HepG2 (cell line): ENCODE measurements at regions of chr3 and their contacts with region 1.

Region 1: DNA sequence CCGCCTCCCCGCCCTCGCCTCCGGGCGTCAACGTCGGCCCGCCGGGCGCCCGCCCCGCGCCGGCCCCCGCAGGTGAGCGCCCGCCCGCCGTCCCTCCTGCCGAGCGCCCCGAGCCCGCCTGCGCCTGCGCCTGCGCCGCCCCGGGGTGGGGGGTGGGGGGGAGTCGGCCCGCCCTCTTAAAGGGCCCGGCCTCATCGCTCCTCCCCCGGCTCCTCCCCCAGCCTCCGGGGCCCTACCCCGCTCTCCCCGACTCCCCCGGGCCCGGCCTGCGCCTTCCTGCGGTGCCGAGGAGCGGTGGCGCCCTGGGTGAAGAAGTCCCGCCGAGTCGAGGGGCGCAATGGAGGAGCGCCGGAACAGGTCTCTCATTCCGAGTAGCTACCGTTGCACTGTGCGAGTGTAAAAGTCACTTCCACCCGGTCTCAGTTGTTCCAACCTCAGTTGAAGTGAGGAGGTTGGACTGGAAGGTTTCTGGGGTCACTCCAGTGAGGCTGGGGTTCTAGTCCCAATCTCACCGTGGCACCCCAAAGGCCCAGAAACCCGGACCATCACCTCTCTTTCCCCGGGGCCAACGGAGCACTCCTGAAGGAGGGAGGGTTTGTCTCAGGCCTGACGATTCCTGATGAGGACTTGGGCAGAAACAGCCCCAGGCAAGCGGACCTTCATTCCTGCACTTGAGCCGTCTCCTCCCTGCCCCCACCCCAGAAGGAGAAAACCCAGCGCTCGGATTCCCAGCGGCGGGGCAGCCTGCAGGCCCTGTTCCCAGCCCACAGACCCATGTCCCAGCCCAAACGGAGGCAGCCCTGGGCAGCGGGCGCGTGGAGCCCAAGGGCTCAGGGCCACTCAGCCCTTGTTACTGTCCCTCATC is 1.5 kb upstream of the TNK2 start:
- DNase-seq: peak; percentile 58
- ATAC-seq: peak; percentile 68
- H3K4me3 ChIP-seq: peak overlapping the region; percentile 57 to 78 (median 63)
- H3K27ac ChIP-seq: no peak overlapping the region
- H3K4me1 ChIP-seq: peaks cover 69% of the 10 kb centered on the region
- H3K27me3 ChIP-seq: peaks cover 0 to 7% of the 10 kb centered on the region in 2 experiments; a peak in 3 of 5 replicates
- CTCF ChIP-seq: peak; percentile 45; the same call in 1 of the 2 replicates
- EP300 ChIP-seq: no peak
- POLR2A ChIP-seq: no peak; a peak in 1 of 4 replicates
- RAD21 ChIP-seq: no peak

Region 2: DNA sequence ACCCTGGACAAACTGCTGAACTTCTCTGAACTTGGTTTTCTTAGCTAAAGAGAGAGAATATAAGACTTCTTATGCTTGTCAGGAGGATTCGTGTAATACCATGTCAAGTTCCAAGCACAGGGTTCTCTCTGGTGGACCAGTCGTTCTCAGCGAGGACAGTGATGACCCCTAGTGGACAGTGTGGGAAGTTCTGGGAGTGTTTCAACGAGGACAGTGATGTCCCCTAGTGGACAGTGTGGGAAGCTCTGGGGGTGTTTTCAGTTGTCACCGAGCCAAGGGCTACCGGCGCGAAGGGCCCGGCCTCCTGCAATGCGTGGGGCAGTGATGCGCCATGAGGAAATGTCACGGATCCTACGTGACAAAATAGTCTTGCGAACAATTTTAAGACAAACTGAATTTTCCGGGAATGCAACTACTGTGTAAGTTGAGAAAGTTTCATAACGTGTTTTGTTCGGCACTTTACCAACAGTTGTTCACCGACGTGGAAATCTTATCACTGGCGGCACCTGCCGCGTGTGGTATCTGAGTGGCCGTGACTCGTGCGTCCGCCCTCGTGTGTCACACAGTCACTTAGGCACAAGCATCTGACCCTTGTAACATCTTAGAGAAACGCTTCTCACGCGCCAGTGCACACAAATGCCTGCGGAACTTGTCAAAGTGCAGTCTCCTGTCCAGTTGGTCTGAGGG is 58.9 kb before region 1 on chr3:
- CTCF ChIA-PET with region 1: interaction called, 4 read pairs
- POLR2A ChIA-PET with region 1: no interaction called
- in situ Hi-C with region 1: loop called (anchors 10 kb)
- intact Hi-C with region 1: no loop called
- DNase-seq: peak; percentile 86
- ATAC-seq: peak; percentile 57
- H3K4me3 ChIP-seq: peak overlapping the region in 1 of 3 experiments; percentile 26; a peak in 1 of 6 replicates
- H3K27ac ChIP-seq: no peak overlapping the region
- H3K4me1 ChIP-seq: peaks cover 39% of the 10 kb centered on the region
- H3K27me3 ChIP-seq: peaks cover 0 to 28% of the 10 kb centered on the region in 2 experiments; a peak in 3 of 5 replicates
- CTCF ChIP-seq: peak; percentile 99
- EP300 ChIP-seq: no peak
- POLR2A ChIP-seq: no peak
- RAD21 ChIP-seq: peak; percentile 87

Region 3: GRCh38 chr3:195863121-195864006 is 46.5 kb before region 1 on chr3:
- CTCF ChIA-PET with region 1: interaction called, 24 read pairs
- POLR2A ChIA-PET with region 1: no interaction called
- in situ Hi-C with region 1: loop called (anchors 10 kb)
- intact Hi-C with region 1: loop called (anchors 1 kb)
- DNase-seq: peak; percentile 60
- ATAC-seq: peak; percentile 98
- H3K4me3 ChIP-seq: no peak overlapping the region
- H3K27ac ChIP-seq: no peak overlapping the region
- H3K4me1 ChIP-seq: peaks cover 4% of the 10 kb centered on the region; the same call in 1 of the 2 replicates
- H3K27me3 ChIP-seq: peaks cover 0 to 25% of the 10 kb centered on the region in 2 experiments
- CTCF ChIP-seq: peak; percentile 97
- EP300 ChIP-seq: no peak
- POLR2A ChIP-seq: no peak
- RAD21 ChIP-seq: peak; percentile 96

Region 4: DNA sequence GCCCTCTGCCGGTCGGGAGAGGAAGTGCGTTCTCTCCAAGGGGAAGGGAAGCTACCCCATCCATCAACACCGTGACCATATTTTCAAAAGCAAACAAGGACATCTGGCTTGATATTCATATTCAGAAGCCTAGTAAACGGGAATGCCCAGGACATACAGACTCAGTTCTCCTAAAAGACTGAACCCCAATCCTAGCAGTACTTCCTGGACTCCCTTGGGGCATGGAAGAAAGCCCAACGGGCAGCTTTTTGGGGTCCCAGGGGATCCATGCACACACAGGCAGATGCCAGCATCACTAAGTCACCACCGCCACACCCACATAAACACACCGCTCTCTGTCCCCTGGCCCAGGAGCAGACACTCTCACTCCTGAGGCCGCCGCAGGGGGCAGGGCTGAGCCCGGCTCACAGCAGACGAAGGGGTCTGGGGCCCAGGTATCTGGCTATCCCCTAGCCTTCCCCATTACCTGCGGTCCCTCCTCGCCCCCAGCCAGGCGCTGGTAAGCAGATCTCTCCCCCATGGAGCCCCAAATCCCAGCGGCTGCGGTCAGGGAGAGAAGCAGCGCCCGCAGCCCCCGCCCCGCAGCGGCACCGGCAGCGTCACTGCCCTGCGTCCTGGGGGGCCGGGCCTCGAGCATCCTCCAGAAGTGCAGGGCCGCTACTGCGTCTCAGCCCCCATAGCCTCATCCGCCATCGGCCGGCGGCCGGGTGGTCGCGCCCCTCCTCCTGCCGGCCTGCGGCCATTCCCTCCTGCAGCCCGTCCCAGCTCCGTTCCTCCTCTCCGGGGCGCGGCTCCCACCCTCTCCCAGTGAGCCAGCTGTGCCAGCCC is 14.9 kb before region 1 on chr3:
- CTCF ChIA-PET with region 1: interaction called, 5 read pairs
- POLR2A ChIA-PET with region 1: interaction called, 6 read pairs
- in situ Hi-C with region 1: no loop called
- intact Hi-C with region 1: loop called (anchors 2 kb)
- DNase-seq: peak; percentile 72
- ATAC-seq: peak; percentile 68
- H3K4me3 ChIP-seq: peak overlapping the region; percentile 51 to 78 (median 69)
- H3K27ac ChIP-seq: no peak overlapping the region
- H3K4me1 ChIP-seq: peaks cover 65% of the 10 kb centered on the region
- H3K27me3 ChIP-seq: 0 out of 5 replicates have a peak, but pooled peaks cover 0 to 8% of the 10 kb centered on the region in 2 experiments
- CTCF ChIP-seq: peak; percentile 90
- EP300 ChIP-seq: no peak
- POLR2A ChIP-seq: no peak
- RAD21 ChIP-seq: peak; percentile 73; the same call in 1 of the 2 replicates